ENCODE measurements at regions of chr5 and their contacts with region 1.

Region 1: DNA sequence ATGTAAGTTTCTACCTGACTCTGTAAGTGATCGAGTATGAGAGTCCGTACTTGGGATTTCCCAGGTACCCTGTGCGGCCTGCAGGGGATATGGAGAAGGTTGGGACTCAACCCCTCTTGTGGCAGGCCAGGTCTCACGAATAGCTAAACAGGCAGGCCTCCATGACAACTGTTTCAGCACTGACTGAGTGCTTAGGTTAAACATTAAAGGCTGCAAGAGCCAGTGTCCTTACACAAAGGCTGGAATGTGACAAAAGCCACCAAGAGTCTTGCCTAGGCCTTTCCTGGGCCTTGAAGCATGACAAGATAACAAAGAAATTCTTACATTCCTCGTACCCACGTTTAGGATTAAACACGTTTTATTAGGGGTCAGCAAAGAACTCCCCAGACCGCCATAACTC is 58.6 kb downstream of the THBS4 start:
- DNase-seq: no peak
- ATAC-seq: no peak
- H3K4me3 Mint-ChIP-seq: no peak overlapping the region
- H3K27ac Mint-ChIP-seq: peak overlapping the region; percentile 27
- H3K4me1 Mint-ChIP-seq: peaks cover 17% of the 10 kb centered on the region
- H3K27me3 Mint-ChIP-seq: no peaks in the 10 kb centered on the region
- CTCF ChIP-seq: no peak

Region 2: GRCh38 chr5:80083101-80083890 is 10.5 kb before region 1 on chr5:
- CTCF ChIA-PET with region 1: interaction called, 28 read pairs
- POLR2A ChIA-PET with region 1: interaction called, 4 read pairs
- intact Hi-C with region 1: no loop called
- DNase-seq: peak; percentile 34
- ATAC-seq: peak; percentile 84
- H3K4me3 Mint-ChIP-seq: peak overlapping the region; percentile 51
- H3K27ac Mint-ChIP-seq: peak overlapping the region; percentile 78
- H3K4me1 Mint-ChIP-seq: peaks cover 11% of the 10 kb centered on the region
- H3K27me3 Mint-ChIP-seq: no peaks in the 10 kb centered on the region
- CTCF ChIP-seq: peak; percentile 55

Region 3: DNA sequence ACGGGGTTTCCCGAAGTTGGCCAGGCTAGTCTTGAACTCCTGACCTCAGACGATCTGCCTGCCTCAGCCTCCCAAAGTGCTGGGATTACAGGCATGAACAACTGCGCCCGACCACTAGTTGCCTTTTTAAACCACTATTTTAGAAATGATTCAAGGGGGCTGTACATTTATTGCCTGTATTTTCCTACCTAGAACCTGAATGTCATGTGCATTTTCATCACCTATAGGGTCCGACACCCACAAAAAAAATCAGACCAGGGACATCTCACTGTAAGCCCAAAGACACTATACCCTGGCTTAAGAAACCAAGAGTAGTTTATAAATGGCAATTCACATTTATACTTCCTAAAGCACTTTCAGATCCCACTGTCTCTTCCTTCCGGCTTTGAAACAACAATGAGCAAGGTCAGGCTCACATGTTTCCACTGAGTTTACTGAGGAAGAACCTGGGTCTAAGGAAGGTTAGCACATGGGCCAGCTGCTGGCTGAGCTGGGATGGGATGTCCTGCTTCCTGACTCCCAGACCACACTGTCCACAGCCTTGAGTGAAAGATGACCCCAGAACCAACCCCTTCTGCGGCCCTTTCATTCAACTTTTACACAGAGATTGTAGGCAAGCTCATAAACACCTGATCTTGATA is 74.7 kb after region 1 on chr5:
- CTCF ChIA-PET with region 1: interaction called, 10 read pairs
- POLR2A ChIA-PET with region 1: no interaction called
- intact Hi-C with region 1: no loop called
- DNase-seq: no peak
- ATAC-seq: peak; percentile 27
- H3K4me3 Mint-ChIP-seq: no peak overlapping the region
- H3K27ac Mint-ChIP-seq: peak overlapping the region; percentile 63
- H3K4me1 Mint-ChIP-seq: peaks cover 54% of the 10 kb centered on the region
- H3K27me3 Mint-ChIP-seq: no peaks in the 10 kb centered on the region
- CTCF ChIP-seq: no peak

Region 4: GRCh38 chr5:80204808-80205614 is 111.2 kb after region 1 on chr5:
- CTCF ChIA-PET with region 1: interaction called, 20 read pairs
- POLR2A ChIA-PET with region 1: no interaction called
- intact Hi-C with region 1: no loop called
- DNase-seq: no peak
- ATAC-seq: peak; percentile 59
- H3K4me3 Mint-ChIP-seq: no peak overlapping the region
- H3K27ac Mint-ChIP-seq: peak overlapping the region; percentile 84
- H3K4me1 Mint-ChIP-seq: peaks cover 76% of the 10 kb centered on the region
- H3K27me3 Mint-ChIP-seq: no peaks in the 10 kb centered on the region
- CTCF ChIP-seq: no peak

Region 5: DNA sequence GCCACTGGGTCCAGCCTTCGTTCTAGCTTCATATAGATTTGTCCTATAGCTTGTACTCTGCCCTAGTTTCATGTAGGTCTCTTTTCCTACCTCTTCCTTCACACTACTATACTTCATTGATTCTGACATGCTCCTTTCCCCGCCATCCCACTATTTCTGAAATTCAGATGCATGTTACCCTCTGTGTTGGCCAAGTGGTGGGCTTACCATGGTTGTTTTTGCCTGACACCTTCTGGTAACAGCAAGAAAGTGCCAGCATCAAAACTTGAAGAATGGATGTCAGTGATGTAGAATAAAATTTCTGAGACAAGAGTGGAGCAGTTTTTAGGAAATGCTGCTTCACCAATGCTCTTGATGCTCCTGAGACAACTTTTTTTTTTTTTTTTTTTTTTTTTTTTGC is 181.6 kb after region 1 on chr5:
- CTCF ChIA-PET with region 1: interaction called, 104 read pairs
- POLR2A ChIA-PET with region 1: no interaction called
- intact Hi-C with region 1: loop called (anchors 2 kb)
- DNase-seq: peak; percentile 53
- ATAC-seq: peak; percentile 73
- H3K4me3 Mint-ChIP-seq: no peak overlapping the region
- H3K27ac Mint-ChIP-seq: peak overlapping the region; percentile 36
- H3K4me1 Mint-ChIP-seq: peaks cover 17% of the 10 kb centered on the region
- H3K27me3 Mint-ChIP-seq: no peaks in the 10 kb centered on the region
- CTCF ChIP-seq: peak; percentile 56

Region 6: DNA sequence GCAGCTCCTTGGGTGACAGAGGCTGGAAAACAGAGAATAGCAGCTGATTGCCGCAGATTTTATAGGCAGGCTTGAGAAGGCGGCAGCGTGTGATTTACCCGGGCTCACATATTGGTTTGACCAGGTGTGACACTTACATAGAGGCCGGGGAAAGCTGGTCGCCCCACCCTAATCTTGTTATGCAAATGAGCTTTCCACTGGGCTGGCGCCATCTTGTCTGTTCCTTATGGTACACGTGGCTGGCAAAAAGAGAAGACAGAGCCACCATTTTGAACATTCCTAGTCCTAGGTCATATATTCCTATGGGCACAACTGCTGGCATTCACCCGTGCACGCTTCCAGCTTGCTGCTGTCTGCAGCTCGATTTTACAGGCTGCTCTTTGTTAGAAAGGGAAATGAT is 214.7 kb after region 1 on chr5:
- CTCF ChIA-PET with region 1: interaction called, 55 read pairs
- POLR2A ChIA-PET with region 1: interaction called, 3 read pairs
- intact Hi-C with region 1: loop called (anchors 2 kb)
- DNase-seq: no peak
- ATAC-seq: no peak
- H3K4me3 Mint-ChIP-seq: no peak overlapping the region
- H3K27ac Mint-ChIP-seq: no peak overlapping the region
- H3K4me1 Mint-ChIP-seq: no peaks in the 10 kb centered on the region
- H3K27me3 Mint-ChIP-seq: no peaks in the 10 kb centered on the region
- CTCF ChIP-seq: no peak

Measured in activated CD8-positive, alpha-beta T cell treated with anti-CD3 and anti-CD28 coated beads for 36 hours (primary cell).